ENCODE measurements at regions of chr12 and their contacts with region 1.

Region 1: GRCh38 chr12:29073628-29074239 is 75.3 kb upstream of the FAR2 start:
- DNase-seq: no peak
- ATAC-seq: peak; percentile 69

Region 2: DNA sequence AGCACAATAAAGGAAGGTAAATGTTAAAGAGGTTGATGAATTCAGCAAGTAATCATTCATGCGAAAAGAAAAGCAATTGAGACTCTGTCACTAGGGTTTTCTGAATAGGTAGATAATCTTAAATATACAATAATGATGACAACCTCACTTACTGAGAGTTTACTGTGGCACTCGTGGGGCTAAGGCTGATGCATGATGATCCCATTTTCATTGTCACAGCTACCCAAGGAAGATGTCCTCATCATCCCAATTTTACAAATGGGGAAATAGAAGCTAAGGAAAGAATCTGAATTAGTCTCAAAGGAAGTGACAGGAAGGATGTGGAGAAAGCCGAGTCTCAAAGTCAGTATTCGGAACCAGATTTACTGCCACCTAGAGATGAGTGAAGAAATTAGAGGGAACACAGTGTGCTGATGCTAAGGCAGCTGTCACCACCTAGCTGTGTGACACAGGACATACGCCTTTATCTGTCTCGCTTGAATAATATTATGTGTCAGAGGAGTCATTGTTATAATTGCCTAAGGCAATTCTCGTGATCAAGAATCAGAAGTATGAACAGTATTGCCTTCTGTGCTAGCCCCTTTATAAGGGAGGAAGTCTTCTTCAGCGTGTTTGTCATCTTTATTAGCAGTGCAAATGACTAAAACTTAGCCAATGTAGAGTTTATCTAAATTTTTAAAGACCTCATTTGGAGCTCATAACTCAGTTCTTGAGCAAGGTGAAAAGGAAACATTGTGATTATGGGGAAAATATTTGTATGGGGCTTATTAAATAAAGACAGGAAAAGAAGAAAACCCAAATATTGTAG is 244.0 kb after region 1 on chr12:
- intact Hi-C with region 1: loop called (anchors 5 kb)
- DNase-seq: no peak
- ATAC-seq: peak; percentile 98

Region 3: DNA sequence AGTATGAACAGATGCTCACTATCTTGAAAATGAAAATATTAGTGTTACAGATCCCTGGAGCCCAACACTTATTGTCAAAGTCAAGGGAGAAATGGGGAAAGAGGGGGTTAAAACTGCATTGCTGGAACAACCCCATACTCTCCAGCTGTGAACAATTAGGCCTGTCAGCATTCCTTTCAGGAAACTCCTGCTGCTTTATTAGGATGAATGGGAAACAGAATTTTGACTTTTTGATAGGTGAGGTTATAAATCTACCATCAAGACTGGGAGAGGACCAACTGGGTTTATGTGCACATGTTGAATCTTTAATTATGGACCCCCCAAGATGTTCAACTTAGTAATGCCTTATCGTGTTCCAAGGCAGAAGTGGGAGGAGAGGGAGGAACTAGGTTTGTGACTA is 625.0 kb after region 1 on chr12:
- intact Hi-C with region 1: no loop called
- DNase-seq: no peak
- ATAC-seq: no peak